ENCODE measurements at regions of chr20 and their contacts with region 1.

Region 1: DNA sequence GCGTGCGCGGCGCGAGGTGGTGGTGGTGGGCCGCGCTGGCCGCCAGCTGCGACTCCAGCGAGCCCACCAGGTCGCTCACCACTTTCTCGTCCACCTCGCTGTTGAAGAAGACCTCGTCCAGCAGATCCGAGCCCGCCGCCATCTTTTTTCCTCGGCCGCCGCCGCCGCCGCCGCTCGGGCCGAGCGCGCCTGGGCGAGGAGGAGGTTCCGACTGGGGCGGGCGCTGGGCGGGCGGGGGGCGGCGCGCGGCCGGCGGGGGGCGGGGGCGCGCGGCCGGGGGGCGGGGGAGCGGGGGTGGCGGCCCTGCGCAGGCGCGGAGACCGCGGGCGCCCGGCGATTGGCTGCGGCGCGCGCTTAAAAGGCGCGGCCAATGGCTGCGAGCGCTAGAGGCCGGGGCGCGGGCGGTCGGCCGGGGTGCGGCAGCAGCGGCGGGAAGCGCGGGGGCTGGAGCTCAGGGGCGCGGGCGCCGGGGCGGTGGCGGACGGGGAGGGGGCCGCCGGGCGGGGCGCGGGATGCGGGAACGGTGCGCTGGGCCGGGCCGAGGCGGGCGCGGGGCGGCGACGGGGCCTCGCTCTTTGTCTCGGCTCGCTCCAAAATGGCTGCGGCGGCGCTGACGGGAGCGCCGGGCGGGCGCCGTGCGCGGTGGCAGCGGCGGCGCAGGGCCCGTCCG is at the start of gene TAF4:
- DNase-seq: peak; percentile 66 to 82
- ATAC-seq: peak; percentile 33
- total RNA-seq, gene TAF4: 22.1 to 28.2 TPM

Region 2: DNA sequence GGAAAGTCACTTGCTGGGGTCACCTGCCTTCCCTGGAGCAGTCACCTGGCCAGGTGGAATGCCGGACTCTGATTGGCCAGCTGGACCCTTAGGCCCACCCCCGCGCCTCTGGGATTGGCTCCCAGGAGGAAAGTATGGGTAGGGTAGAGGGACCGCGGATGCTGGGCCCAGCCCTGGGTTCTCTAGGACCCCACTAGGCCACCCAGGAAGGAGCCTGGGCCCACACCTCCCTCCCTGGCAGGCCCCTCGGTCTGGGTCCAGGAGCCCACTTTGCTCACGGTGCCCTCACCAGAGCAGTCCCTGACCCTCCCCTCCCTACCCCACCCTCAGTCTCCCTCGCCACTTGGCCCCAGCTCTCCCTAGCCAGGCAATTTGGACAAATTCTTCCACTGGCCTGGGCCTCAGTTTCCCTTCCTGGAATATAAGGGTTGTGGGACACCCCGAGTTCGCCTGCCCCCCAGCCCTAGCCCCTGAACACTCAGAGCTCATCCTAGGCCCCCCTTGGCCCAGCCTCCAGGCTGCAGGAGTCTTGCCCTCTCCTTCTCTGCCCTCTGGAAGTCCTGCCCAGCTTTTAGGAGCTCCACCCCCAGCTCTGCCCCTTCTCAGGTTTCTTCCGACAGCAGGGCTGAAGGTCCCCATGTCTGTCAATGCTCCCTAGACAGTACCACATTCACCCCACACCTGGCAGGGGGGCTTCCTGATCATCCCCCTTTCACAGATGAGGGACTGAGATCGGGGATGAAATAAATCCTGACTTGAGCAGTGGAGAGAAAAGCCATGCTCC is 299.7 kb before region 1 on chr20:
- intact Hi-C with region 1: no loop called
- DNase-seq: peak in 1 of 2 donors; percentile 19
- ATAC-seq: no peak

Region 3: DNA sequence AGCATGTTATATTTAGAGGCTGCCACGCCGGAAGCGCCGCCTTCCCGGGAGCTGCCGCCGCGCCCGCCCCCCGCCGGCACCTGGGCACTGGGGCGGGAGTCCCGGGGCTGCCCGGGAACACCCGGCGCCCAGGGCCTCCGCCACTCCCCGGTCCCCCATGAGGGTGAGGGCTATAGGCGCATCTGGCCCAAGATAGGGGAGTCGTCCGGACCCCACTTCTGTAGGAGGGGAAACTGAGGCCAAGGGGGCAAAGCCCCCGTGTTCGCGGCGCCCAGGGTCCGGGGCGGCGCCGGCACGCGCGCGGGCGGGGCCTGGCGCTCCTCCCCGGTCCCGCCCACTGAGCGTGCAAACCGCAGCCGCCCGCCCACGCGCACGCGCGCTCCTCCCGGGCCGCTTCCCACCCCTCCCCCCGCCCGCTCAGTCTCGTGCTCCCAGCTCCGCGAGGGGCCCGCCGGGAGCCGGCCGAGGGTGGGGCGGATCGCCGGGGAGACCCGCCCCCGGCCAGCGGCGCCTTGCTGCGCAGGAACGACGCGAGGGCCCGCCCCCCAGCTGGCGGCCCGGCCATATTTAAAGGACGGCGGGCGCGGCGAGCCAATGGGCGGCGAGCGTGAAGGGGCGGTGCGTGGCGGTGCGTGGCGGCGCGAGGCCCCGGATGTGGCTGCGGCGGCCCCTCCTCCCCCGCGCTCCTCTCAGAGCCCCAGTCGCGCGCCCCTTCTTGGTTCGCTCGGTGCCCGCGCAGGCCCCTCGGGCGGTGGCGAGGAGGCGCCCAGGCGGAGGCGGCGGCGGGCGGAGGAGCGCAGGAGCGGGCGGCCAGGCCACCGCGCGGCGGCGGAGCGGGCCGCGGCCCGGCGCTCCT is 56.2 kb after region 1 on chr20 and contains the start of gene LSM14B:
- intact Hi-C with region 1: loop called in 1 of 2 experiments (anchors 5 kb)
- DNase-seq: peak; percentile 93 to 96
- ATAC-seq: peak; percentile 81
- total RNA-seq, gene LSM14B: 33.0 to 36.3 TPM

Region 4: GRCh38 chr20:62136283-62137091 is 70.7 kb after region 1 on chr20:
- intact Hi-C with region 1: loop called (anchors 5 to 10 kb)
- DNase-seq: peak; percentile 55 to 82
- ATAC-seq: peak; percentile 71

Region 5: GRCh38 chr20:62143118-62143973 is 77.5 kb after region 1 on chr20 and contains the starts of genes PSMA7 and SS18L1:
- intact Hi-C with region 1: loop called (anchors 5 to 10 kb)
- DNase-seq: peak; percentile 74 to 90
- ATAC-seq: peak; percentile 88
- total RNA-seq, gene PSMA7: 148 to 178 TPM
- total RNA-seq, gene SS18L1: 11.3 to 17.2 TPM

Region 6: GRCh38 chr20:62177307-62177706 is 111.5 kb after region 1 on chr20:
- intact Hi-C with region 1: no loop called
- DNase-seq: no peak
- ATAC-seq: no peak